SK-N-SH (cell line): ENCODE measurements at regions of chr22 and their contacts with region 1.

Region 1: GRCh38 chr22:20456064-20456721 is 18.6 kb upstream of the SCARF2 start:
- DNase-seq: peak; percentile 91
- H3K4me3 ChIP-seq: no peak overlapping the region; a peak in 1 of 4 replicates
- H3K27ac ChIP-seq: peak overlapping the region in 1 of 2 experiments; percentile 50; a peak in 1 of 4 replicates
- H3K4me1 ChIP-seq: peaks cover 0 to 7% of the 10 kb centered on the region in 2 experiments; a peak in 1 of 4 replicates
- H3K27me3 ChIP-seq: no peaks in the 10 kb centered on the region
- CTCF ChIP-seq: peak; percentile 89
- EP300 ChIP-seq: no peak
- RAD21 ChIP-seq: peak; percentile 98

Region 2: GRCh38 chr22:20405931-20406685 is 50.1 kb before region 1 on chr22:
- CTCF ChIA-PET with region 1: interaction called, 14 read pairs
- POLR2A ChIA-PET with region 1: no interaction called
- DNase-seq: no peak
- H3K4me3 ChIP-seq: no peak overlapping the region
- H3K27ac ChIP-seq: no peak overlapping the region
- H3K4me1 ChIP-seq: no peaks in the 10 kb centered on the region
- H3K27me3 ChIP-seq: no peaks in the 10 kb centered on the region
- CTCF ChIP-seq: no peak
- EP300 ChIP-seq: no peak
- RAD21 ChIP-seq: no peak

Region 3: GRCh38 chr22:20469110-20469868 is 13.1 kb after region 1 on chr22:
- CTCF ChIA-PET with region 1: interaction called, 12 read pairs
- POLR2A ChIA-PET with region 1: no interaction called
- DNase-seq: no peak
- H3K4me3 ChIP-seq: no peak overlapping the region
- H3K27ac ChIP-seq: no peak overlapping the region; a peak in 1 of 4 replicates
- H3K4me1 ChIP-seq: peaks cover 0 to 5% of the 10 kb centered on the region in 2 experiments; a peak in 1 of 4 replicates
- H3K27me3 ChIP-seq: no peaks in the 10 kb centered on the region
- CTCF ChIP-seq: no peak
- EP300 ChIP-seq: no peak
- RAD21 ChIP-seq: no peak